GM10248 (cell line): ENCODE measurements at regions of chr11 and their contacts with region 1.

Region 1: GRCh38 chr11:10519630-10520029 is 21.4 kb downstream of the RNF141 start:
- DNase-seq: no peak
- CTCF ChIP-seq: no peak

Region 2: DNA sequence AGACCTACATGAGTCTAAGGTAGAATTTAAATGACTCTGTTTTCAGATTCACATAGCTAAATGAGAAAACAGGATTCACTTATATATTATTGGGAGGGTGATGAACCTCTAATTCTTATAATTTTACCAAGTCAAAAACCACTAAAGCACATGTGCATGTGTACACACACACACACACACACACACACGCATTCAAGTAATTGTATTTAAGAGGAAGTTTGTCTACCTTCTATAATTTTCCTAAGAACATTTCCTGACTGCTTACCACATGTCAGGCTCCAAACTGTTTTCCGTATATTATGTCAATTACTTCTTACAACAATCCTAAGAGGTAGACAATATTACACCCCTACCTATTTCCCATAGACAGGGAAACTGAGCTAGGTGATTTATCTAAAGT is 14.7 kb after region 1 on chr11:
- CTCF ChIA-PET with region 1: interaction called, 10 read pairs
- POLR2A ChIA-PET with region 1: interaction called, 4 read pairs
- DNase-seq: no peak
- CTCF ChIP-seq: no peak